ENCODE measurements at regions of chr7 and their contacts with region 1.

Region 1: GRCh38 chr7:128135515-128136214 is 104.4 kb upstream of the LRRC4 start:
- DNase-seq: no peak

Region 2: DNA sequence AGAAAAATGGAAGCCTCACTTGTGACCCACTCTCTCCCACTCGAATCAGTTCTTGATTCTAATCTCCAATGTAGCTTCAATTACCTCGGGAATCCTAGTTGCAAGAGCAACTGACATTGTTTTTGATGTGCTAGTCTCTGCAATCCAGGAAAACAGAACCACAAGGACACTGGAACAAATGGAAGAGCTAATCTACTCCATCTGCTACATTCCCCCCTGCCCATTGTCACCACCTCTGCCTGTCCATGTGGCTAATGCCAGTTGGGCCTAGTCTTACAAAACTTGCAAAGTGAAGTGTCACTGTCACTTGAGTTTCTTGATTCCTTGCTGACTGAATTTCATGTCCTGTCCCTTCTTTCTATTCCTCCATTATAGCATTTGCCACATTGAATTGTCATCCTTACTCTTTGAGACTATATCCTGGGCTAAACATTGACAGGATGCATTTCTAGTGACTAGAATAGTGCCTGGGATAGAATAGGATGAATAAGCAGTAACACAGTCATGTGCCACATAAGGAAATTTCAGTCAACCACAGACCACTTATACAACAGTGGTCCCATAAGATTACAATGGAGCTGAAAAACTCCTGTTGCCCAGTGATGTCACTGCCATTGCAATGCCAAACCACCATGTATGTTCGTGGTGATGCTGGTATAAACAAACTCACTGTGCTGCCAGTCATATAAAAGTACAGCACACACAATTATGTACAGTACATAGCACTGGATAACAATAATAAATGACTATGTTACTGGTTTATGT is 563.7 kb before region 1 on chr7:
- intact Hi-C with region 1: loop called (anchors 5 kb)
- DNase-seq: no peak

Region 3: GRCh38 chr7:128108641-128109423 is 26.8 kb before region 1 on chr7:
- intact Hi-C with region 1: no loop called
- DNase-seq: no peak

Region 4: DNA sequence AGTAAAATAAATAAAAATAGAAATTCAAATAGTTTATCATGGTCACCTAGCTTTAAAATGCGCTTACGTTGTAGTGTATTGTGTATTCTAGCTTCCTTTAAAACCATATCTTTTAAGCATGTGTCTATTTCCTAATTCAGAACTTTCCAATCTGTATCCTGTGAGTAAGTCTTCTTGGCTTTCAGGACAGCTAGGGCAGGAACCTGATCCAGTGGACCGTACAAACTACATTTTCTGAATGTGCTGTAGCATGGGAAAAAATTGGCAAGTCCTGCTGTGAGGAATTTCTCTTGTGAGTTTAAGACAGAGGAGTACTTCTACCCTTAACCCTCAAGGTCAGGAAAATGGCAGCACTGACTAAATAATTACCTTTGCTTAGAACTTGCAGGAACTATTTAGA is 627.9 kb after region 1 on chr7:
- intact Hi-C with region 1: no loop called
- DNase-seq: no peak

Measured in cardiac septum (tissue), 1 donor.